Activated B cell treated with CpG ODN at 0.5 μM for 24 hours (primary cell): ENCODE measurements at regions of chr19 and their contacts with region 1.

Region 1: GRCh38 chr19:51367565-51368365 is 1.0 kb downstream of the CLDND2 start:
- DNase-seq: peak; percentile 99
- ATAC-seq: peak; percentile 84
- H3K4me3 Mint-ChIP-seq: peak overlapping the region; percentile 98
- H3K27ac Mint-ChIP-seq: peak overlapping the region; percentile 96
- H3K4me1 Mint-ChIP-seq: peaks cover 36% of the 10 kb centered on the region
- H3K27me3 Mint-ChIP-seq: no peaks in the 10 kb centered on the region
- CTCF ChIP-seq: no peak

Region 2: GRCh38 chr19:51136851-51137551 is 230.8 kb before region 1 on chr19:
- CTCF ChIA-PET with region 1: no interaction called
- POLR2A ChIA-PET with region 1: no interaction called
- intact Hi-C with region 1: no loop called
- DNase-seq: no peak
- ATAC-seq: no peak
- H3K4me3 Mint-ChIP-seq: no peak overlapping the region
- H3K27ac Mint-ChIP-seq: no peak overlapping the region
- H3K4me1 Mint-ChIP-seq: peaks cover 23% of the 10 kb centered on the region
- H3K27me3 Mint-ChIP-seq: peaks cover 44% of the 10 kb centered on the region
- CTCF ChIP-seq: no peak

Region 3: GRCh38 chr19:51274037-51274370 is 93.8 kb before region 1 on chr19:
- CTCF ChIA-PET with region 1: no interaction called
- POLR2A ChIA-PET with region 1: interaction called, 13 read pairs
- intact Hi-C with region 1: no loop called
- DNase-seq: no peak
- ATAC-seq: no peak
- H3K4me3 Mint-ChIP-seq: no peak overlapping the region
- H3K27ac Mint-ChIP-seq: no peak overlapping the region
- H3K4me1 Mint-ChIP-seq: peaks cover 2% of the 10 kb centered on the region
- H3K27me3 Mint-ChIP-seq: peaks cover 19% of the 10 kb centered on the region
- CTCF ChIP-seq: no peak

Region 4: GRCh38 chr19:51346742-51347141 is 21.0 kb before region 1 on chr19:
- CTCF ChIA-PET with region 1: interaction called, 7 read pairs
- POLR2A ChIA-PET with region 1: interaction called, 10 read pairs
- intact Hi-C with region 1: loop called (anchors 1 kb)
- DNase-seq: no peak
- ATAC-seq: no peak
- H3K4me3 Mint-ChIP-seq: no peak overlapping the region
- H3K27ac Mint-ChIP-seq: no peak overlapping the region
- H3K4me1 Mint-ChIP-seq: peaks cover 34% of the 10 kb centered on the region
- H3K27me3 Mint-ChIP-seq: no peaks in the 10 kb centered on the region
- CTCF ChIP-seq: no peak

Region 5: GRCh38 chr19:51441410-51442390 is 73.9 kb after region 1 on chr19:
- CTCF ChIA-PET with region 1: no interaction called
- POLR2A ChIA-PET with region 1: no interaction called
- intact Hi-C with region 1: loop called (anchors 1 kb)
- DNase-seq: peak; percentile 48
- ATAC-seq: peak; percentile 89
- H3K4me3 Mint-ChIP-seq: peak overlapping the region; percentile 71
- H3K27ac Mint-ChIP-seq: peak overlapping the region; percentile 77
- H3K4me1 Mint-ChIP-seq: peaks cover 30% of the 10 kb centered on the region
- H3K27me3 Mint-ChIP-seq: peaks cover 16% of the 10 kb centered on the region
- CTCF ChIP-seq: no peak